ENCODE measurements at regions of chr16 and their contacts with region 1.

Region 1: DNA sequence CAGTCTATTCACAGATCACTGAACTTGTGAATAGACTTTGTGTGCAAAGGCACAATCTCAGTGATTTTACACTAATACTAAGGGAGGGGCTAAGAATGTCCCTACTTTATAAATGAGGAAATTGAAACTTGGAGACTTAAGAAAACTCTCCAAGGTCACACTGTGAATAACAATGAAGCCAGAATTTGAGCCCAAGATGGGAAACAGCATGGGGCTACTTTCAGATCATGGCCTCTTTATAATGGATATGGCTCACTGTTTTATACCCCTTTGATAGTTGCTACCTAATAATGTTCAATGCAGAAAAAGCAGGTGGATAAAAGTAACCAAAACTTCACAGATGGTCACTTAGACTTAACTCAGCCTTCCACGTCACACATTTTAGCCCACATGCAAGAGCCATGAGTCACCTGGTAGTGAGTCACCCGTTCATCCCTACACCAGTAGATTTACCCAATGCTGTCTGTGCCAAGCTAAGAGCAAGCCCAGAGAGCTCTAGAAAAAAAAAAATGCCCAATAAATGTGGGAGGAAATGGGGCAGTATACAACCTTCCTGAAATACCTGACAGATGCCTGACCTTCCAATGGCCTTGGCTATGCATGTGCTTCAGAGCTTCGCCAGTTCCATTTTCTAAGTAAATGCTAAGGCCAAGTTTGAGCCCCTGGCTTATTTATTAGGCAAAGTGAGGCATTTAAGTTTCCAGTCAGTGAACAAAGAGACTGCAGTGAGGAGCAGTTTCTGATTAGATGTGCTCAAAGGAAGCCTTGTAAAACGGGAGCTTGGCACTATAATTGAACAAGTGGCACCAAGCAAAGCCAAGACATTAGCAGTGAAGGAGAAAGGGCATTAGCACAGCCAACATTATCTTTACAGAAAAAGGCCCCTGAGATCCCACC is 219.7 kb downstream of the TMEM114 start:
- DNase-seq: no peak

Region 2: DNA sequence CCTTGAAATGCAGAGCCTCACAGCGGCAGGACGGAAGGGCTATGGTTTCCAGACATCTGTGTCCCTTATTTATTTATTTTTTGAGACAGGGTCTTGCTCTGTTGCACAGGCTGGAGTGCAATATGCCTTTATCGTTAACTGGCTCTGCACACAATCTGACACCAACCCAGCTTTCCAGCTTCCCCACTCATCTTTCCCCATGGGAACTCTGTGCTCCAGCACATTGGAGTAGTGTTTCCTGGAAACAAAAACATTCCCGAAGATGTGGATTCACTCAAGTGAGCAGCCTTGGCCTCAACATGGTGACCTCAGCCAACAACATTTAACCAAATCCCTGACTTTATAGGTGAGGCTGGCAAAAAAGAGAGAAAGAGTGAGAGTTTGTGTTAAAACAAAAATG is 87.4 kb before region 1 on chr16:
- intact Hi-C with region 1: loop called in 1 of 2 experiments (anchors 10 kb)
- DNase-seq: no peak

Region 3: DNA sequence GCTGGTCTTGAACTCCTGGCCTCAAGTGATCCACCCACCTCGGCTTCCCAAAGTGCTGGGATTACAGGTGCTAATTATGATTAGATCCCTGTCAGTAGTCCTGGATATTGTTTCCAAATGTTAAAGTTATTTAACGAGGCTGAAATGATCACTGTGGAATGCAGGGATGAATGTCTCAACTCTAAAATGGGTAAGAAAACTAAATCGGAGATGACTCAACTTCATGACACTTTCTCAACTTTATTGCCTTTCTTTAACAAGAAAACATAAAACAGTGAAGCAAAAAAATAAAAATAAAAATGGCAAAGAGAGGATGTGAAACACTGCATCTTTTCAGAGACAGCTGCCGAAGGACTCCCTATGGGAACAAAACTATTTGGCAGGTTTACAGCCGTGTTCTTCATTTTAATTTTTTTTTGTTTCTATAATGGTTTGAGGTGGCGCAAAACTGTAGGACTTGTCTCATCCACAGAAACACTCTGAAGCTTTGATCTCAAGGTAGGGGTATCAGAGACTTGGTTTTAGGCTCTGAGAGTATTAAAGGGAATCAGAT is 1429.6 kb after region 1 on chr16:
- intact Hi-C with region 1: no loop called
- DNase-seq: no peak